Psoas muscle (tissue), 8 donors: ENCODE measurements at regions of chrX and their contacts with region 1.

Region 1: DNA sequence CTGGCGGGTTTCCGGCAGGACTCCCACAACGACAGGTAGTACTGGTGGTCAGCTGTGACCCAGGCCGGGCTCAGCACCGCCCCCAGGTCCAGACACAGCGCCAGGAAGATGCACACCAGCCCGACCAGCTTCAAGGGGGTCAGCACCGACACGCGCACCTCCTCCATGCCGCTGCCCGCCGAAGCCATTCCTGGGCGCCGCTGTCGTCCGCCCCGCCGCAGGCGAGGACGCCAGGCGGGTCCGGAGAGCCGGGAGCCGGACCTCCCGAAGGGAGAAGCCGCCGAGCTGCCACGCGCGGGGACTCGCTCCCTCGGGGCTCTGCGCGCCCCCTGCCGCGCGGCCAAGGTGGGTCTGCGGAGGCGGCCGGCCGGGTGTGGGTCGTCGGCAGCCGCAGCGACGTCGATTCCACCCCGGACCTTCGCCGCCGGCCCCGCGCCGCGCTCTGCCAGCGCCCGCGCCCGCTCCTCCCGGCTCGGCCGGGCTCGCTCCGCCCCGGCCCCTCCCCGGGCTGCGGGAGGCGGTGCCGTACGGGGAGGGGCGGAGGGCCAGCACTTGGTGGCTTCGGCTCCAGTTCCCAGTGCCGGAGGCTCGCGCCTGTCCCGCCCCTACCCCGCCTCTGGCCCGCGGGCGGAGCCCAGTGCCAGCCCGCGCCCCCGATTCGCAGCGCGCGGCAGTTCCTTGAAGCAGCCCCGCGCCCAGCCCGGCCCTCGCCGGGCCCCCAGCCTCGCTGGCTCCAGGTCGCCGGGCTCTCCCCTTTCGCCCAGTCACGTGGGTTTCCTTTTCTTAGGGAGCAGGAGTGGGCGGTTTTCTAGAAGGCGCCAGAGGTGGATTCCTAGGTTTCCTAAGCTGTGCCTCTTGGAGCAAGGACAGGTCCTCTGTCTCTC is at the start of gene TMEM47:
- DNase-seq: peak; percentile 72 to 84
- ATAC-seq: peak; percentile 90 to 95 (median 92)
- H3K4me3 ChIP-seq: peak within 1 kb of the TSS; percentile 64
- H3K27ac ChIP-seq: peak within 1 kb of the TSS; percentile 82
- H3K4me1 ChIP-seq: peaks cover 9% of the 10 kb centered on the region
- H3K27me3 ChIP-seq: no peaks in the 10 kb centered on the region
- CTCF ChIP-seq: no peak
- total RNA-seq, gene TMEM47: 17.3 to 34.3 (median 28.5) TPM

Region 2: DNA sequence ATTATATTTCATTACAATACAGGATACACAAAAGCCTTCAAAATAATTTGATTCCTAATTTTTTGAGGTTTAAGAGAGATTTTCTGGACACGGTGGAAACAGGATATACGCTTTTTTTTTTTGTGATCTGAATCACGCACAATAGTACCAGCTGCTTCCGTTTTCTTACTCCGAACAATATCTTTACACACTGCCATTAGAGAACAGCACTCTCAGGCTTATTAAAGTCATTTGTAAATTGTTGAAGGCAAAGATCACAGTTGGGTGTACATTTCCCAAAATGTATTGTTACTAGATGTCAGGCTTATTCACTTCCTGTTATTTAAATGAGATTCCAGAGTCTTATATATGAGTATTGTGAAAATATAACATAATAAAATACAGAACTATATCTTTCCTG is 71.5 kb before region 1 on chrX:
- intact Hi-C with region 1: no loop called
- DNase-seq: no peak
- ATAC-seq: no peak
- H3K4me3 ChIP-seq: no peak overlapping the region
- H3K27ac ChIP-seq: no peak overlapping the region
- H3K4me1 ChIP-seq: no peaks in the 10 kb centered on the region
- H3K27me3 ChIP-seq: peaks cover 0 to 4% (median 0%) of the 10 kb centered on the region in 3 donors
- CTCF ChIP-seq: no peak

Region 3: GRCh38 chrX:34866646-34867045 is 209.6 kb after region 1 on chrX:
- intact Hi-C with region 1: loop called in 1 of 2 experiments (anchors 10 kb)
- DNase-seq: no peak
- ATAC-seq: no peak
- H3K4me3 ChIP-seq: no peak overlapping the region
- H3K27ac ChIP-seq: no peak overlapping the region
- H3K4me1 ChIP-seq: no peaks in the 10 kb centered on the region
- H3K27me3 ChIP-seq: no peaks in the 10 kb centered on the region
- CTCF ChIP-seq: no peak